ENCODE measurements at regions of chr2 and their contacts with region 1.

Region 1: DNA sequence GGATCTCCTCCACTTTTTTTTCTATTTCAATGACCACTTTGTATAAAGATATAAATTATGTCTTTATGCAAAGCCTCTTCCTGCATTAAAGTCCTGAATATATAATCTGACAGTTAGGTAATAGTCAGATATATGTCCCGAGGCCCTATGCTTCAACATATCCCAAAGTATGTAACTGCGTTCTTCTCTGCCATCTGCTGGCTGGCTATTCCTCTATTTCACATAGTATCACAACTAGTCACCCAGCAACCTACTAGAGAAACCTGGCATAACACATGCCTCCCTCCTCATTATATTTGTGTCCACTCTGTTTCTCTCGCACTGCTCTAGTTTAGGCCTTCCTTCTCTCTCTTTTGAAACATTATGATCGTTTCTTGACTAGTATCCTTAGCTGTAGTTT is 640.8 kb downstream of the DPP10 start:
- DNase-seq: no peak
- ATAC-seq: no peak

Region 2: GRCh38 chr2:114729026-114729425 is 354.2 kb before region 1 on chr2:
- intact Hi-C with region 1: loop called (anchors 5 to 10 kb)
- DNase-seq: no peak
- ATAC-seq: peak in 1 of 2 donors; percentile 38

Region 3: GRCh38 chr2:115285416-115285815 is 202.2 kb after region 1 on chr2:
- intact Hi-C with region 1: no loop called
- DNase-seq: no peak
- ATAC-seq: no peak

Measured in left cardiac atrium (tissue), 4 donors.